Tibial artery (tissue), 4 donors: ENCODE measurements at regions of chr2 and their contacts with region 1.

Region 1: DNA sequence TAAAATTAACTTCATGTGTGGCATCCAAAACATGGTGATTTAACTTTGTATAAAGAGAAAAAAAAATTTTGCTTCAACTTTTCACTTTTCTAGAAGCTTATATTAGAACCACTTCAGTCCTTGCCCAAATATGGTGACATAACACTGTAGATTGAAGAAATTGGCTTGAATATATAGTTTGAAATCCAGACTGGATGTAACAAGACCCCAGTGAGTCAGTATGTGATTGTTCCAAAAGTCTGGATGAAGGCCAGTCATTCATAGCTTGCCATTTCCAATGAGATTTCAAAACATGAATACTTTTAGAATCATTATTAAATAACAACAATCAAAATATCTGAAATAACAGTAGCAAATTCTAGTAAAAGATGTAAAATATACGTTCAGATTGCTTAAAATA is 104.8 kb upstream of the FN1 start:
- DNase-seq: no peak
- H3K4me3 ChIP-seq: no peak overlapping the region
- H3K27ac ChIP-seq: peak overlapping the region; percentile 37 to 41
- H3K4me1 ChIP-seq: peaks cover 0 to 39% (median 29%) of the 10 kb centered on the region in 4 donors
- H3K27me3 ChIP-seq: no peaks in the 10 kb centered on the region
- CTCF ChIP-seq: no peak

Region 2: GRCh38 chr2:215583881-215584280 is 43.2 kb after region 1 on chr2:
- intact Hi-C with region 1: no loop called
- DNase-seq: no peak
- H3K4me3 ChIP-seq: no peak overlapping the region
- H3K27ac ChIP-seq: no peak overlapping the region
- H3K4me1 ChIP-seq: peaks cover 0 to 5% (median 0%) of the 10 kb centered on the region in 4 donors
- H3K27me3 ChIP-seq: no peaks in the 10 kb centered on the region
- CTCF ChIP-seq: no peak

Region 3: GRCh38 chr2:215598376-215598975 is 57.8 kb after region 1 on chr2:
- intact Hi-C with region 1: loop called (anchors 10 kb)
- DNase-seq: no peak
- H3K4me3 ChIP-seq: no peak overlapping the region
- H3K27ac ChIP-seq: no peak overlapping the region
- H3K4me1 ChIP-seq: peaks cover 0 to 21% (median 7%) of the 10 kb centered on the region in 4 donors
- H3K27me3 ChIP-seq: no peaks in the 10 kb centered on the region
- CTCF ChIP-seq: no peak